SK-N-SH (cell line): ENCODE measurements at regions of chr1 and their contacts with region 1.

Region 1: DNA sequence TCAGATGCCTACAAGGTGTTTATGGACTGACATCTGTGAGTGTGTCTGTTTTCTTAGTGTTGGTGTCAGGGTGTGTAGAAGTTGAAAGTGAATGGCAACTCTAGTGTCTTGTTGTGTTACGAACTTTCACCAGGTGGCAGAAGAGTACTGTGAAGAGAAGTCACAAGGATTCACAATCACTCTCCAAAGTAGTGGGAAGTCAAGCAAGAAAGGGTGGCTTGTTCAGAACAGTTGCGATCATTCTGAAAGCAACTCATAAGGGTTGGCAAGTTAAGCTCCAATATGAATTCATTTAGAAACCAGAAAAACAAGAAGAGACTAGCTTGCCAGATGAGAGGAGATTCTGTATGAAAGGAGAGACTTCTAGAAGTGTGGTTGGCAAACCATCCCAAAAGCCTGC is 86.1 kb downstream of the FASLG start:
- DNase-seq: peak; percentile 22
- H3K4me3 ChIP-seq: no peak overlapping the region
- H3K27ac ChIP-seq: no peak overlapping the region; a peak in 1 of 4 replicates
- H3K4me1 ChIP-seq: no peaks in the 10 kb centered on the region; a peak in 2 of 4 replicates
- H3K27me3 ChIP-seq: no peaks in the 10 kb centered on the region
- CTCF ChIP-seq: peak; percentile 78
- EP300 ChIP-seq: no peak
- RAD21 ChIP-seq: peak; percentile 85

Region 2: DNA sequence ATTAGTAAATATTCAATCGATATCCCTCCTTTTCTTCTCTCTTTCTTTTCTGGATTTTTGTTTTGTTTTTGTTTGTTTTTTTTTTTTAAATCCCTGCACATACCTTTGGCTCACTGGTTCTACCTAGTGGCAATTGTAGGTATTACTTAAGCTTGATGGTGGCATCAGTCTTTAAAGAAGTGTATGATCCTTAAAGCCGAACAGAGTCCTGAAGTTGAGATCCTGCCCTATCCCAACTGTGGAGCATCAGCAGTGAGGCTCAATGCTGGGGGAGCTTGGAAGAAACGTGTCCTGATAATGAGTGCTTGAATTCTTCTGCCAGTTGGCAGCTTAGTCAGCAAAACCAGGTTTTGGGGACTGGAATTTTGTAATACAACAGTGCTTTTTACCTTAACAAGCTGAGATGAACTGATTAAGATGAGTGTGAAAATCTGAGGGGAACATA is 25.3 kb before region 1 on chr1:
- CTCF ChIA-PET with region 1: interaction called, 31 read pairs
- POLR2A ChIA-PET with region 1: no interaction called
- DNase-seq: peak; percentile 57
- H3K4me3 ChIP-seq: no peak overlapping the region
- H3K27ac ChIP-seq: no peak overlapping the region
- H3K4me1 ChIP-seq: peaks cover 6 to 7% of the 10 kb centered on the region in 2 experiments; a peak in 3 of 4 replicates
- H3K27me3 ChIP-seq: no peaks in the 10 kb centered on the region
- CTCF ChIP-seq: peak; percentile 86
- EP300 ChIP-seq: no peak
- RAD21 ChIP-seq: peak; percentile 80

Region 3: GRCh38 chr1:172727956-172728603 is 16.9 kb before region 1 on chr1:
- CTCF ChIA-PET with region 1: interaction called, 31 read pairs
- POLR2A ChIA-PET with region 1: no interaction called
- DNase-seq: peak; percentile 28
- H3K4me3 ChIP-seq: no peak overlapping the region
- H3K27ac ChIP-seq: no peak overlapping the region
- H3K4me1 ChIP-seq: peaks cover 3 to 6% of the 10 kb centered on the region in 2 experiments; a peak in 2 of 4 replicates
- H3K27me3 ChIP-seq: no peaks in the 10 kb centered on the region
- CTCF ChIP-seq: peak; percentile 59
- EP300 ChIP-seq: no peak
- RAD21 ChIP-seq: peak; percentile 18; the same call in 1 of the 2 replicates

Region 4: DNA sequence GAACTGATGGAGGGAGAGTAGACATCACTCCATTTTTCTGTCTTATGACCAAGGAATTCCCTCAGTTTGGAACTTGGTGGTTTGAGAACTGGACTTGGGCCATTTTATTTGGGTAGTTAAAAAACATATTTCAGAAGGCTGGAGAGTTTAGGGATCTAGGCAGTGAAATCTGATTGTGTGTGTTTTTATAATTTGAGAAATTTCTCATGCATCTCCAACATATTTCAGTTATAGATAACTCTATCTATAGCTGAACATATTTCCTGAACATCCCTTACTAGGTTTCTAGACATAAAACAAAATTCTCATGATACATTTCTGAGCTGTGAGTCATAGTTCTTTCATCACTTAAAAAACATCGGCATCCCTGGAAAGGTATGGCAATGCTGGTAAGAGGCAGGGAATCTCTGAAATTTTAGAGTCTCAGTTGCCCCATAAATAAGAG is 16.6 kb after region 1 on chr1:
- CTCF ChIA-PET with region 1: interaction called, 12 read pairs
- POLR2A ChIA-PET with region 1: no interaction called
- DNase-seq: no peak
- H3K4me3 ChIP-seq: no peak overlapping the region
- H3K27ac ChIP-seq: 0 out of 4 replicates have a peak overlapping the region, but pooled peaks of 1 of the 2 experiments have one; percentile 25
- H3K4me1 ChIP-seq: no peaks in the 10 kb centered on the region; a peak in 1 of 4 replicates
- H3K27me3 ChIP-seq: no peaks in the 10 kb centered on the region
- CTCF ChIP-seq: no peak
- EP300 ChIP-seq: no peak
- RAD21 ChIP-seq: no peak

Region 5: GRCh38 chr1:172778456-172779455 is 33.7 kb after region 1 on chr1:
- CTCF ChIA-PET with region 1: interaction called, 11 read pairs
- POLR2A ChIA-PET with region 1: no interaction called
- DNase-seq: peak; percentile 5
- H3K4me3 ChIP-seq: no peak overlapping the region
- H3K27ac ChIP-seq: no peak overlapping the region
- H3K4me1 ChIP-seq: peaks cover 0 to 5% of the 10 kb centered on the region in 2 experiments; a peak in 3 of 4 replicates
- H3K27me3 ChIP-seq: no peaks in the 10 kb centered on the region
- CTCF ChIP-seq: peak; percentile 41
- EP300 ChIP-seq: no peak
- RAD21 ChIP-seq: peak; percentile 24

Region 6: DNA sequence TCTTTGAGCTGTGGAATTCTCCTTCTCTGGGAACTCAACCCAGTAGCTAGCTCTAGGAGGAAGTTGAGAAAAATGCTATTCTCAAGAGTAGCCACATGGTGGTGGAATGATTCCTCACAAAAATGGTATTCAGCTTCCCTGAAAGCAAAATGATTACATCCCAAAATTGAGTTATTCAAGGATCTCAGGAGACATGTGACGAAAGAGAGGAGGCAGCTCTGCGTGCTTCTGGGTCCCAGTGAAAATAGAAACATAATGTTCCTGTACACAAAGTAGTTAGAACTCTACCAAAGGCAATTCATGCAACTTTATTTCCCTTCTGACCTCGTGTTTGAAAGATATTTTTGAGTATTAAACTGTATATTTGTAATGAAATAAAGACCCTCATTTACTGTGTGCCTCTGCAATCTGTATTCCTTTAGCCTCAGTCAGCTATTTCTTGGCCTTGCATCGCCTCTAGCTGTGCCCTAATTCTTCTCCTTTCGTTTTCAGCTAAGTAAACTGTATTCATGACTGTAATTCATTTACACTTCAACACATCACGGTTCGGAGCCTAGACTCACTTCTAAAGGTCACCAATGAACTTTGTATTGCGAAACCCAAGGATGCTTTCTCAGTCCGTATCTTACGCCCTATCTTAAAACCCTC is 81.2 kb after region 1 on chr1:
- CTCF ChIA-PET with region 1: interaction called, 13 read pairs
- POLR2A ChIA-PET with region 1: no interaction called
- DNase-seq: peak; percentile 38
- H3K4me3 ChIP-seq: no peak overlapping the region
- H3K27ac ChIP-seq: peak overlapping the region in 1 of 2 experiments; percentile 86; a peak in 1 of 4 replicates
- H3K4me1 ChIP-seq: peaks cover 0 to 7% of the 10 kb centered on the region in 2 experiments; a peak in 2 of 4 replicates
- H3K27me3 ChIP-seq: no peaks in the 10 kb centered on the region
- CTCF ChIP-seq: peak; percentile 79
- EP300 ChIP-seq: 0 out of 4 replicates have a peak, but pooled peaks of 1 of the 2 experiments have one; percentile 17
- RAD21 ChIP-seq: peak; percentile 85

Region 7: GRCh38 chr1:172917972-172918371 is 173.0 kb after region 1 on chr1:
- CTCF ChIA-PET with region 1: no interaction called
- POLR2A ChIA-PET with region 1: no interaction called
- DNase-seq: no peak
- H3K4me3 ChIP-seq: no peak overlapping the region
- H3K27ac ChIP-seq: peak overlapping the region; percentile 87 to 95; a peak in 3 of 4 replicates
- H3K4me1 ChIP-seq: peaks cover 6 to 45% of the 10 kb centered on the region in 2 experiments
- H3K27me3 ChIP-seq: no peaks in the 10 kb centered on the region
- CTCF ChIP-seq: no peak
- EP300 ChIP-seq: peak; percentile 35 to 99; a peak in 3 of 4 replicates
- RAD21 ChIP-seq: no peak

Region 8: DNA sequence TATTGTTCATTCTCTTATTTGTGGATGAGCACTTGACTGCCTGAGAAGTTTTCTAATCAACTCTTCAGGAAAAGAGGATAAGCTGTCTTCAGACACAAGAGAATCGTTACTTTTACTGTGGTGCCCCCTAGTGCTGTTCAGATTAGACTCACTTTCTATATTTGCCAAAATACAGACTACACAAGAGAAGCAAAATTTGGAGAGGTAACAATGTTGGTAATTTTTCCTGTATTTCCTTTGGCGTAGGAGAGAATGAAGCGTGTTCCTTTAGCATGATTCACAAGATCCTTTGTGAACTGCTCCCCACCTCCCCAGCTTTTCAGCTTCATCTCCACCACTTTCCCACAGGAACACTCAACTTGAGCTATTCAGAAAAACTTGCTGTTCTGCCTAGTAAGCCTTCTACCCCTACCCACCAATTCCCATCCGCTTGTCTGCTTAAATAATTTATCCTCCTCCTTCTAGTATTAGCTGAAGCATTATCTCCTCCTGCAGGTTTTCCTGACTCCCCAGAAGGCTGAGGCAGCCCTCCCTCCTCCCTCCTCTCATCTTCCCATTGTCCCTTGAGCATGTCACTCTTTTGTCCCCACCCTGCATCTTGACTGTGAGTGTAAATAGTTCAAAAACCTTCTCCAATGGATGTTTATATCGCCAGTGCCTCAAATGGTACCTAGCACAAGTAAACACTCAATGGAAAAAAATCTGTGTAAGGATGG is 457.6 kb after region 1 on chr1:
- CTCF ChIA-PET with region 1: interaction called, 72 read pairs
- POLR2A ChIA-PET with region 1: no interaction called
- DNase-seq: peak; percentile 8
- H3K4me3 ChIP-seq: peak overlapping the region in 1 of 2 experiments; percentile 39; a peak in 1 of 4 replicates
- H3K27ac ChIP-seq: peak overlapping the region; percentile 24 to 82; a peak in 3 of 4 replicates
- H3K4me1 ChIP-seq: peaks cover 0 to 6% of the 10 kb centered on the region in 2 experiments; a peak in 3 of 4 replicates
- H3K27me3 ChIP-seq: no peaks in the 10 kb centered on the region
- CTCF ChIP-seq: peak; percentile 81
- EP300 ChIP-seq: 0 out of 4 replicates have a peak, but pooled peaks of 1 of the 2 experiments have one; percentile 25
- RAD21 ChIP-seq: peak; percentile 82